PC-3 (cell line): ENCODE measurements at regions of chr17 and their contacts with region 1.

Region 1: GRCh38 chr17:60231234-60231633 is 81.5 kb downstream of the CA4 start:
- DNase-seq: peak; percentile 61
- ATAC-seq: peak; percentile 84
- H3K4me3 ChIP-seq: no peak overlapping the region
- H3K27ac ChIP-seq: no peak overlapping the region
- H3K4me1 ChIP-seq: no peaks in the 10 kb centered on the region
- H3K27me3 ChIP-seq: no peaks in the 10 kb centered on the region
- CTCF ChIP-seq: peak; percentile 87

Region 2: DNA sequence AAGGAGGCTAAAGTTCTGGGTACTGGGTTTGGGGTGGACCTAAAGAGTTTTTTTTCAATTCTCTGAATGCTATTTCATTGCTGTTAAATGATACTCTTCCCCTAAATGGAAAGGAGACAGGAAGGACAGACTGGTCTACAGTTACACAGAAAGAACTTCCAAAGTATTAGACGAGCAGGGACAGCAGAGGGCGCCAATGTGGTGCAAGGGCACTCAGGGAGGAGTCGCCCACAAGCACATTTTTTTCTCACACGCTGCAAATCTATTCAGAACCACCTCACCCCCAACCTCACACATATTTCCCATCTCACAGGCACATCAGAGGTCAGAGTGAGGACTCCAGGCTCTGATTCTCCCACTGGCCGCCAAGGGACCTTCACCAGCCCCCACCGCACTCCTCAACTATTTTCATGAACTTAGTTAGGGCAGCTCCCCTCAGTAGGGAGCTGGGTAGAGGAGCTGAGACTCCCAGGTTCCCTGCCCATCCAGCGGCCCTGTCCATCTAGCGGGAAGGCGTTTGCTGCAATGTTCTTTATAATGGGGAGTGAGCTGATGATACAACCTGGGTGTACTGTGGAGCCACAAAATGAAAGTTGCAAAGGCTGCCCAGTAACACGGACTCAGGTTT is 88.2 kb before region 1 on chr17:
- CTCF ChIA-PET with region 1: no interaction called
- POLR2A ChIA-PET with region 1: no interaction called
- intact Hi-C with region 1: loop called (anchors 10 kb)
- DNase-seq: peak; percentile 96
- ATAC-seq: peak; percentile 89
- H3K4me3 ChIP-seq: peak overlapping the region; percentile 62
- H3K27ac ChIP-seq: no peak overlapping the region
- H3K4me1 ChIP-seq: peaks cover 11% of the 10 kb centered on the region
- H3K27me3 ChIP-seq: peaks cover 4% of the 10 kb centered on the region; the same call in 1 of the 2 replicates
- CTCF ChIP-seq: peak; percentile 96

Region 3: DNA sequence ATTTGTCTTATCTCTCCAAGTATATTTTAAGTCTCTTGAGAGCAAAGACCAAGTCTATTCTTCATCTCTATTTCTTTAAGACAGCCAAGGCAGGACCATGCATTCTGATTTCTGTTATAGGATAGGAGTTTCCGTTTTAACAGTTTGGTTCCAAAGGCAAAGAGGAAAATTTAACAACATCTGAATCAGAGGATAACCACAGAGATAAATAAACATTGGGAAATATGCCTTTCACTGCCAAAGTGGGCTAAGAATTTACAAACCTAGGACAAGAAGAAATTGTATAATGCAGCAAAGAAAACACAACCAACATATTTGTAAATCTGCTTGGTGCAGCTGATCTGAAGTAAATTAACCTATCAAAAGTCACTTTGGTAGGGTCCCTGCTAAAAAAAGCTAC is 123.0 kb after region 1 on chr17:
- CTCF ChIA-PET with region 1: interaction called, 12 read pairs
- POLR2A ChIA-PET with region 1: no interaction called
- intact Hi-C with region 1: no loop called
- DNase-seq: peak; percentile 92
- ATAC-seq: peak; percentile 81
- H3K4me3 ChIP-seq: no peak overlapping the region
- H3K27ac ChIP-seq: peak overlapping the region; percentile 18; the same call in 1 of the 2 replicates
- H3K4me1 ChIP-seq: peaks cover 39% of the 10 kb centered on the region
- H3K27me3 ChIP-seq: no peaks in the 10 kb centered on the region
- CTCF ChIP-seq: no peak

Region 4: GRCh38 chr17:61065263-61065773 is 834.1 kb after region 1 on chr17:
- CTCF ChIA-PET with region 1: interaction called, 11 read pairs
- POLR2A ChIA-PET with region 1: no interaction called
- intact Hi-C with region 1: no loop called
- DNase-seq: no peak
- ATAC-seq: peak; percentile 35
- H3K4me3 ChIP-seq: no peak overlapping the region
- H3K27ac ChIP-seq: no peak overlapping the region
- H3K4me1 ChIP-seq: no peaks in the 10 kb centered on the region
- H3K27me3 ChIP-seq: no peaks in the 10 kb centered on the region
- CTCF ChIP-seq: no peak